ENCODE measurements at regions of chr1 and their contacts with region 1.

Region 1: DNA sequence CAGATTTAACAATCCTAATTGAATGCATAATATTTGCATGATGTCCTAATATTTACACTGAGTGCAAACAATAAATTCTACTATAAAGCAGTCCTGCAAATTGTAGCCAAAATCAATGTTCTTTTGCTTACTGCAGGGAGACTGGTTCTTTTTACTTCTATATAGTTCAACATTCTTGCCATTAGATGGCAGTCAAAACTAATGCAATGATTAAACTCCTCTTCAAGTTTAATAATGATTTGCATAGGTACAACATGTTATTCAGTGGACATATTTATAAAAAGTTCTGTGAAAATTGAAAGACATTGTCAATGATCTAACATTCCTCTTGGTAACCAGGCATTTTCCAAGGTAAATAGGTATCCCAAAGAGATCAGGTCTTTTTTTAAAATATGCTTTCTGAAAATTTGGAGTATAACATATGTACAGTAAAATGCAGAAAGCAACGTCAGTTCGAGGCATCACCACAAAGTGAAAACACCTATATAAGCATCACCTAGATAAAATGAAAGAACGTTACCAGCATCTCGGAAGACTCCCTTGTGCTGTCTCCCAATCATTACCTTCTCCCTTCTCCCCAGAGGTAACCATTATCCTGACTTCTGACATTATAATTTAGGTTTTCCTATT is 9.8 kb upstream of the FNBP1L start:
- DNase-seq: no peak
- H3K4me3 ChIP-seq: no peak overlapping the region
- H3K27ac ChIP-seq: no peak overlapping the region
- H3K4me1 ChIP-seq: no peaks in the 10 kb centered on the region
- H3K27me3 ChIP-seq: peaks cover 0 to 9% (median 0%) of the 10 kb centered on the region in 4 donors
- CTCF ChIP-seq: peak; percentile 68 to 69 (median 69)
- EP300 ChIP-seq: no peak
- POLR2A ChIP-seq: no peak

Region 2: GRCh38 chr1:93255222-93256079 is 182.6 kb before region 1 on chr1:
- intact Hi-C with region 1: no loop called
- DNase-seq: no peak
- H3K4me3 ChIP-seq: no peak overlapping the region
- H3K27ac ChIP-seq: no peak overlapping the region
- H3K4me1 ChIP-seq: no peaks in the 10 kb centered on the region
- H3K27me3 ChIP-seq: no peaks in the 10 kb centered on the region
- CTCF ChIP-seq: no peak
- EP300 ChIP-seq: no peak
- POLR2A ChIP-seq: no peak

Region 3: DNA sequence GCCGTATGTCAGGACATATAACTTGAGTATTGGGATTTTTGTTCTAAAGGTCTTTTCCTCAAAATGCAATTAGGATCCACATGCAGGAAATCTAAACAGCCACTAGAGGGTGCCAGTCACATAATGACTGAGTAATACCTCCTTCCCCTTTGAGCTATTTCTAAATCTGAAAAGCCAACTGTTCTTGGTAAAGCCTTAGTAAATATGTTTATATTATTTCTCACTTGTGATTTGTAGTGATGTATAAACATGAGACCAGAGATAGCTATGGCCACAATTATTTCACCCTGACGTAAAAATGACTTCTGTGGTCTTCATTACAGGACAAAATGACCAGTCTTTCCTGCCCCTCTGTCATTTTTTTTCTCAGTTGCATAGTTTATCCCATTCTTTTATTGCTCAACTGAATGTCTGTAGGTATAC is 133.4 kb before region 1 on chr1:
- intact Hi-C with region 1: loop called (anchors 10 kb)
- DNase-seq: no peak
- H3K4me3 ChIP-seq: no peak overlapping the region
- H3K27ac ChIP-seq: no peak overlapping the region
- H3K4me1 ChIP-seq: no peaks in the 10 kb centered on the region
- H3K27me3 ChIP-seq: no peaks in the 10 kb centered on the region
- CTCF ChIP-seq: peak; percentile 74 to 93 (median 85)
- EP300 ChIP-seq: no peak
- POLR2A ChIP-seq: no peak

Region 4: GRCh38 chr1:93346421-93346991 is 91.6 kb before region 1 on chr1:
- intact Hi-C with region 1: no loop called
- DNase-seq: no peak
- H3K4me3 ChIP-seq: peak overlapping the region; percentile 84 to 97 (median 90)
- H3K27ac ChIP-seq: peak overlapping the region; percentile 88 to 95 (median 93)
- H3K4me1 ChIP-seq: peaks cover 31 to 51% (median 44%) of the 10 kb centered on the region in 4 donors
- H3K27me3 ChIP-seq: no peaks in the 10 kb centered on the region
- CTCF ChIP-seq: no peak
- EP300 ChIP-seq: no peak
- POLR2A ChIP-seq: no peak

Region 5: DNA sequence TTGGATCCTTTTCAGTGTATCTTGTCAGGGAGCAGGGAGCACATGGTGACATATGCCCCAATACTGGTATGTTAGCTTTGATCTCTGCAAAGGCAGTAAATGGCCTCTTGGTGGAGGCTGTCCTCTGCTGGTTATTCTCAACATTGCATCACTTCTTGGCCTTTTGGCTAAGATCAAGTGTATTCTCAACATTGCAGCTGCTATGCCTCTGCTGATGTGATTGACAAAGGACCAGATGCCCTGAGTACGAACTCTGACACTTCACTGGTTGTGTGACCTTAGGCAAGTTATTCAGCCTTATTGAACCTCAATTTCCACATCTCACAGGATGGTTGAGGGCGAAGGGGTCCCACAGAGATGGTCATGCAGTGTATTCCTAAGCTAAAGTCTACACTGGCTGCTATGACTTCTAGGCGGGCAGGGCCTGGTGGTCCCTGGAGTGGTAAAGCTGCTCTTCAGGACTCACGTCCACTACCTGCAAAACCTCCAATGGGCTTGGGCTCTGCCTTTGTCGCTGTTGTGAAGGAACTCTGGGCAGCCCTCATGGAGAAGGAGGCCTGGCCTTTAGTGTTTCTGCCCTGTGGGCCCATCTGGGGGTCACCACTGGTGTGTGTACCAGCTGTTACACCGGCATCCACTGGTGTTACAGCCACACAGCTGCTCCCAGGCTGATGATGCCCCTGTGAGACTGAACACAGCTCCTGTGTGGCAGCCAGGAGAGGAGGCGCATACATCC is 376.1 kb after region 1 on chr1:
- intact Hi-C with region 1: loop called (anchors 2 kb)
- DNase-seq: peak; percentile 60
- H3K4me3 ChIP-seq: no peak overlapping the region
- H3K27ac ChIP-seq: no peak overlapping the region
- H3K4me1 ChIP-seq: peaks cover 8 to 35% (median 15%) of the 10 kb centered on the region in 4 donors
- H3K27me3 ChIP-seq: no peaks in the 10 kb centered on the region
- CTCF ChIP-seq: peak; percentile 92 to 99 (median 93)
- EP300 ChIP-seq: no peak
- POLR2A ChIP-seq: no peak

Region 6: GRCh38 chr1:93846211-93846991 is 408.3 kb after region 1 on chr1:
- intact Hi-C with region 1: loop called (anchors 5 kb)
- DNase-seq: peak; percentile 98
- H3K4me3 ChIP-seq: peak overlapping the region; percentile 75 to 93 (median 82)
- H3K27ac ChIP-seq: peak overlapping the region; percentile 94 to 100 (median 100)
- H3K4me1 ChIP-seq: peaks cover 24 to 37% (median 33%) of the 10 kb centered on the region in 4 donors
- H3K27me3 ChIP-seq: no peaks in the 10 kb centered on the region
- CTCF ChIP-seq: peak in 2 of 3 experiments; percentile 29 to 66
- EP300 ChIP-seq: no peak
- POLR2A ChIP-seq: peak; percentile 11

Measured in esophagus muscularis mucosa (tissue), 4 donors.